WTC11 (cell line): ENCODE measurements at regions of chr1 and their contacts with region 1.

Region 1: DNA sequence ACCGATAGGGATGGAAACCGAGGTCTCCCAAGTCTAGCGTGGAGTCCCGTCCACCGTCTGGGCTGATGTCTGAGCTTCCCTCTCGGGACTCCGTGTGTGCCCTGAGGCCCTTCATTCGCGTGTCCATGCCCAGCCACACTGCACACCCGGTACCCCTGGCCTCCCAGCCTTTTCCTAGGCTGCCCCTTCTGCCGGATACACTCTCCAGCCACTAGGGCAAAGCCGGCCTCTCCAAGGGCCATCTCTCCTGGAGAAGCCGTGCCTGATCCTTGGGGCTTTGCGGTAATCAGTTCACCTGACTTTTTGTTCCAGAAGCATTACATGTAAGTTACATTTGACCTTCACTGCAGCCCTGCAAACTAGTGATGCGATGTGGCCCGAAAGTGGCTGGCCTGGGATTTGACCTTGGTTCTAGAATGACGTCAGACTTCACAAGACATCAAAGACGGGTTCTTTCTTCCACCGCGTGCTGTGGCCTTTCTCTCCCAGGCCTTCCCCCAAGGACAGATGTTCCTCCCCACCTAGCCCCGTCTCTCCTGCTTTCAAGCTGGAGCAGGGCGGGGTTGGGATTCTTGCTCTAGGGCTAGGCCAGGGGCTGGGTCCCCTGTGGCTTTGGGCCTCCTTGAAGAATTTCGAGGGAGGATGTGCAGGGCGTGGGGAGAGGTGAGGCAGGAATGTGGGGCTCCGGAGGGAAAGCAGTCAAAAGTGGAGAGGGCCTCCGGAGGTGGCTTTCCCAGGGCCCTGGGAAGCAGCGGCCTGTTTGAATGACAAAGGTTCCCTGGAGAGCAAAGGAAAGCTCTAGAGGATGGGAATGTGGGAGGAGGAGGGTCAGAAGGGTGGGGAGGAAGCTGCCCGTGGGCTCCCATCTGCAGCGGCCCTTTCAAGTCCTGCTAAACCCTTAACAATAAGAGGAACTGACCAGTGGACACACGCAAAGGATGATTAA is 49.7 kb upstream of the SLC2A1 start:
- DNase-seq: peak; percentile 97
- ATAC-seq: peak; percentile 85
- H3K4me3 Mint-ChIP-seq: peak overlapping the region; percentile 61
- H3K27ac Mint-ChIP-seq: peak overlapping the region; percentile 100
- H3K4me1 Mint-ChIP-seq: peaks cover 66% of the 10 kb centered on the region
- H3K27me3 Mint-ChIP-seq: no peaks in the 10 kb centered on the region
- CTCF ChIP-seq: no peak

Region 2: GRCh38 chr1:42860339-42861013 is 147.9 kb before region 1 on chr1:
- CTCF ChIA-PET with region 1: no interaction called
- POLR2A ChIA-PET with region 1: no interaction called
- DNase-seq: no peak
- ATAC-seq: peak; percentile 75
- H3K4me3 Mint-ChIP-seq: no peak overlapping the region
- H3K27ac Mint-ChIP-seq: no peak overlapping the region
- H3K4me1 Mint-ChIP-seq: no peaks in the 10 kb centered on the region
- H3K27me3 Mint-ChIP-seq: peaks cover 14% of the 10 kb centered on the region
- CTCF ChIP-seq: 0 out of 2 replicates have a peak, but pooled peaks have one; percentile 15

Region 3: DNA sequence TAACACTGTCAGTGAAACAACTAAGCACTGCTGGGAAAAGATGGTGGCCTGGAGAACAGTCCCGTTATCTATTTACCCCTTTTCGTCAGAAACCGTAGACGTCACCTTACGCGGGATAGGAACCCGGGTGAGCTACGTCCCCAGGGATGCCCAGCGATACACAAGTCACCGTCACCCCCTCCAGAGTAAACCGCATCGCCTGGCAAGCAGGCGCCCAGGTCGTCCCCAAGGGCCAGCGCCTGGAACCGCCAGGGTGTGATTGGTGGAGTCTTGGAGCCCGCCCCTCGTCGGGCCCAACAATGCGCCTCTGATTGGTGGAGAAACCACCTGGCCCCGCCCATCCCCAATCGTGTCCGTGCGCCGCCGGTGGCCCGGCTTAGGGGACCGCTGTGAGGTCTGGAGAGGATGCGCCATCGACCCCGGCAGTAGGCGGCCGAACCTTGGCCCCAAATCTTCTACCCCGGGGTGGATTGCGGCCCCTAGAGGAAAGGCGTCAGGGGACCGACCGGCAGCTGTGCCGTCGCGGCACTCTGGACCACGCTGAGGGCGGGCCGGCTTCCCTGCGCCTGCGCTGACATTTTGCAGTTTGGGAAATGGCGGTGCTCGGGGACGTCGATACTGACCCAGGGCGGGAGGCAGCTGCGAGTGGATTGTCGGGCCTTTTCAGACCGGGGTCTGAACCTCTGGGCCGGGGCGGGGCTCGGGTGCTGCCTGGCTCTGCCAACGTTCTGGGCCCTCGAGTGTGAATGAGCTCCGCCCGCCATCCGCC is 84.1 kb before region 1 on chr1:
- CTCF ChIA-PET with region 1: interaction called, 3 read pairs
- POLR2A ChIA-PET with region 1: interaction called, 11 read pairs
- DNase-seq: peak; percentile 97
- ATAC-seq: peak; percentile 84
- H3K4me3 Mint-ChIP-seq: peak overlapping the region; percentile 81
- H3K27ac Mint-ChIP-seq: peak overlapping the region; percentile 95
- H3K4me1 Mint-ChIP-seq: peaks cover 52% of the 10 kb centered on the region
- H3K27me3 Mint-ChIP-seq: no peaks in the 10 kb centered on the region
- CTCF ChIP-seq: no peak

Region 4: DNA sequence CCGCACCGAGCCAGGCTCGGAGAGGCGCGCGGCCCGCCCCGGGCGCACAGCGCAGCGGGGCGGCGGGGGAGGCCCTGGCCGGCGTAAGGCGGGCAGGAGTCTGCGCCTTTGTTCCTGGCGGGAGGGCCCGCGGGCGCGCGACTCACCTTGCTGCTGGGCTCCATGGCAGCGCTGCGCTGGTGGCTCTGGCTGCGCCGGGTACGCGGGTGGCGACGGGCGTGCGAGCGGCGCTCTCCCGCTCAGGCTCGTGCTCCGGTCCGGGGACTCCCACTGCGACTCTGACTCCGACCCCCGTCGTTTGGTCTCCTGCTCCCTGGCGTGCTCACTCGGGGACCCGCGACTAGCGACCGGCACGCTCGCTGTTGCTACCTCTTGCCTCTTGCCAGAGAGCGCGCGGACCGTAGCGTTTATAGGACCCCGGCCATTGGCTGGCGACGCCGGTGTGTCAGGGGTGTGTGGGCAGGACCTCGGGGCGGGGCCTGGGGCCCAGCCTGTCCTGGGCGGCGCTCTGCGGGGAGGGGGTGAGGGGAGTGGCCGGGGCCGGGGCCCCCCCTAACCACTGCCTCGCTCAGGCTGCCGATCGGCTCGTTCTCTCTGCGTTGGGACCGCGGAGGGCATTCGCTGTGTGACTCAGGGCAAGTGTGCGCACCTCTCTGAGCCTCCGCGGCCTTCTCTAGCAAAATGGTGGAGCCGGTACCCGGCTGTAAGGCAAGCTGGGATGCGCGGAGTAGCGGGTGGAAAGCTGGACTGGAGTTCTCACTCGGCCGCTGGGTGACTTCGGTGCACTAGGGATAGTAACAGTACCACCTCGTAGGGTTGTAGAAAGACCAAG is 49.7 kb before region 1 on chr1 and contains the start of gene SLC2A1:
- CTCF ChIA-PET with region 1: interaction called, 3 read pairs
- POLR2A ChIA-PET with region 1: interaction called, 37 read pairs
- DNase-seq: peak; percentile 96
- ATAC-seq: peak; percentile 84
- H3K4me3 Mint-ChIP-seq: peak within 1 kb of the TSS; percentile 99
- H3K27ac Mint-ChIP-seq: peak within 1 kb of the TSS; percentile 94
- H3K4me1 Mint-ChIP-seq: peaks cover 68% of the 10 kb centered on the region
- H3K27me3 Mint-ChIP-seq: no peaks in the 10 kb centered on the region; the same call in 1 of the 2 replicates
- CTCF ChIP-seq: no peak
- total RNA-seq, gene SLC2A1: 215 to 415 TPM (median 396 TPM) in 3 replicates